ENCODE measurements at regions of chr21 and their contacts with region 1.

Region 1: GRCh38 chr21:41482301-41482700 is 25.7 kb downstream of the TMPRSS2 start:
- H3K4me3 ChIP-seq: no peak overlapping the region
- H3K27ac ChIP-seq: no peak overlapping the region
- H3K4me1 ChIP-seq: peaks cover 2% of the 10 kb centered on the region; the same call in 1 of the 2 replicates
- CTCF ChIP-seq: no peak

Region 2: GRCh38 chr21:41520575-41521442 is 38.5 kb after region 1 on chr21:
- CTCF ChIA-PET with region 1: interaction called, 11 read pairs
- POLR2A ChIA-PET with region 1: no interaction called
- H3K4me3 ChIP-seq: no peak overlapping the region
- H3K27ac ChIP-seq: no peak overlapping the region
- H3K4me1 ChIP-seq: peaks cover under 1% of the 10 kb centered on the region; the same call in 1 of the 2 replicates
- CTCF ChIP-seq: no peak

Region 3: DNA sequence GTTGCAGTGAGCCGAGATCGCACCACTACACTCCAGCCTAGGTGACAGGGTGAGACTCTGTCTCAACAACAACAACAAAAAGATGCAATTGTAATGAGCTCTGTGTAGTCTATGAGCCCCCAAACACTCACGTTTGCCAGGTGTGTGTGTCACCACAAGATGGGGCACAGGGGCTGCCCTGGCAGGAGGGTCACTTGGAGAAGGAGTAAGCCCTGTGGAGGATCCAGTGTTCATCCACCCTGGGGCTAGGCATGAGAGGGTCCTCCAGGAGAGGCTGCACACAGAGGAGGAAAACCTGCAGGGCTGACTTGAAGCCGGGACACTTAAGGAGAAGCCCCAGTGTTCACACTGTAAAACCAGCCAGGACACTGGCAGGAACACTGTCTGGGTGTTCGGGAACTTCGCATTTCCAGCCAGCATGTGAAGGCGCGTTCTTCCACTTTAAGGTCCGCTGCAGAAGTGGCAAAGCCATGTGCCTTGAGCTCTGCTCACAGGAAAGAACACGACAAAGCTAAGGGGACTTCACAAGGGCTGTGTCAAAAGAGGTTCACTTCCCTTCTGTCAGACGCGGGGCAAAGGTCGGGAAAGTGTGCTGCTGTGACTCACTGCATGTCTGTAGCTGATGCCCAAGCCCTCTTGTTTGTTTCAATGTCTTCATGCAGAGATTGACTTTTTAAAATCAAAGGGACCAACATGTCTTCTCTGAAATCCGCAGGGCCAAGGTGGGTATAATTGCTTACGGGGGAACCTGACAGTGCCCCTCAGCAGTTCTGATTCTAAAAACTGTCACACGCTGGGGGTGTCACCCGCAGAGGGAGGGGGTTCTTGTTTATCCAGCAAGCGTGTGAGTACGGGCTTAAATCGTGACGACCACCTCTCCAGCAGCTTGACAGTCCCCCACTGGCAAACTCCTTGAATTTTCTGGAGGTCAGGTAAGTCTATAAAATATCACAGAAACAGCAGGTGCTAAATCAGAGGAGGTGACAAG is 181.8 kb after region 1 on chr21:
- CTCF ChIA-PET with region 1: no interaction called
- POLR2A ChIA-PET with region 1: no interaction called
- H3K4me3 ChIP-seq: no peak overlapping the region
- H3K27ac ChIP-seq: no peak overlapping the region
- H3K4me1 ChIP-seq: no peaks in the 10 kb centered on the region
- CTCF ChIP-seq: no peak

Measured in HEK293 (cell line).